MCF 10A (cell line): ENCODE measurements at regions of chr1 and their contacts with region 1.

Region 1: DNA sequence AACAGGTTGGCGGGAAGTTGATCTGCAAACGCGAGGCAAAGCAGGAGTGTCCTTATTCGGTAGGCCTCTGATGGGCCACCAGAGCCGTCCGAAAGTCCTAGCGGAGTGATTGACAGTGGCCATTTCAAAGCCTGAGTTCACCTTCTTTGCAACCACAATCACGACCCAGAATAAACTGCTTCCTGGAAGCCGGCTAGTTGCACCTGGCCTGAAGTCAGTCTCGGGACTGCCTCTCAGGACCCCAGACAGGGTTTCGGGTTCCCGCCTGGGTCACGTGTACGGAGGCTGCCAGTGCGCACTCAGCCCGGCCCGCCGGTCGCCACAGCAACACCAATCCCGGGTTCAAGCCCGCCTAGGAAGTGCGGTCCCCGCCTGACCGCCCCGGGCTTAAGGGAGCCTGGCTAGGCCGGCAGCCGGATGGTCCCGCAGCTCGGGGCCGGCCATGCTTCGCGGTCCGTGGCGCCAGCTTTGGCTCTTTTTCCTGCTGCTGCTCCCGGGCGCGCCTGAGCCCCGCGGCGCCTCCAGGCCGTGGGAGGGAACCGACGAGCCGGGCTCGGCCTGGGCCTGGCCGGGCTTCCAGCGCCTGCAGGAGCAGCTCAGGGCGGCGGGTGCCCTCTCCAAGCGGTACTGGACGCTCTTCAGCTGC is at the start of gene TOR3A:
- DNase-seq: peak; percentile 95
- H3K4me3 Mint-ChIP-seq: peak within 1 kb of the TSS; percentile 99
- H3K27ac Mint-ChIP-seq: peak within 1 kb of the TSS; percentile 98
- H3K4me1 Mint-ChIP-seq: peaks cover 12% of the 10 kb centered on the region
- H3K27me3 Mint-ChIP-seq: no peaks in the 10 kb centered on the region
- CTCF ChIP-seq: no peak
- total RNA-seq, gene TOR3A: 24.9 and 31.3 TPM in 2 replicates

Region 2: GRCh38 chr1:178774263-178774662 is 307.5 kb before region 1 on chr1:
- CTCF ChIA-PET with region 1: interaction called, 9 read pairs
- POLR2A ChIA-PET with region 1: no interaction called
- intact Hi-C with region 1: loop called (anchors 2 kb)
- DNase-seq: peak; percentile 54
- H3K4me3 Mint-ChIP-seq: no peak overlapping the region
- H3K27ac Mint-ChIP-seq: no peak overlapping the region
- H3K4me1 Mint-ChIP-seq: no peaks in the 10 kb centered on the region
- H3K27me3 Mint-ChIP-seq: no peaks in the 10 kb centered on the region
- CTCF ChIP-seq: peak; percentile 55

Region 3: GRCh38 chr1:178870944-178871343 is 210.9 kb before region 1 on chr1 and contains the start of gene ANGPTL1:
- CTCF ChIA-PET with region 1: no interaction called
- POLR2A ChIA-PET with region 1: no interaction called
- intact Hi-C with region 1: no loop called
- DNase-seq: no peak
- H3K4me3 Mint-ChIP-seq: no peak within 1 kb of the TSS
- H3K27ac Mint-ChIP-seq: no peak within 1 kb of the TSS
- H3K4me1 Mint-ChIP-seq: no peaks in the 10 kb centered on the region
- H3K27me3 Mint-ChIP-seq: no peaks in the 10 kb centered on the region
- CTCF ChIP-seq: no peak
- total RNA-seq, gene ANGPTL1: not detected in 2 replicates

Region 4: DNA sequence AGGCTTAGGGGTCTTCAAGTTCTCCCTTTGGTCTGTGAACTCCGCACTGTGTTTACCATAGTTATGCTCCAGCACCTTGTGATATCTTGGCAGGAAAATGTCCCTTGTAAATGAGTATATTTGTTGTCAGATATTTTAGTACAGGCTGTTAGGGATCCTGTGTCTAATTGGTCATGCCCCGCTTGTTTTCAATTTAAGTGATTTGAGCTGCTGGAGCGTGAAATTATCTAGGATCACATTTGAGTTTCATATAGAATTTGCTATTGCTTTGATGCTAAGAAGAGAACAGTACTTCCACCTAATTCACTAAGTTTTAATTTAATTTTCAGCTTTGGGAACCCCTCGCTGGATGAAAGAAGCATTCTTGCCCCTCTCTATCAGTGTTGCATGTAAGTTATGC is 15.3 kb before region 1 on chr1:
- CTCF ChIA-PET with region 1: interaction called, 56 read pairs
- POLR2A ChIA-PET with region 1: interaction called, 5 read pairs
- intact Hi-C with region 1: no loop called
- DNase-seq: no peak
- H3K4me3 Mint-ChIP-seq: no peak overlapping the region
- H3K27ac Mint-ChIP-seq: no peak overlapping the region
- H3K4me1 Mint-ChIP-seq: no peaks in the 10 kb centered on the region
- H3K27me3 Mint-ChIP-seq: no peaks in the 10 kb centered on the region
- CTCF ChIP-seq: no peak

Region 5: DNA sequence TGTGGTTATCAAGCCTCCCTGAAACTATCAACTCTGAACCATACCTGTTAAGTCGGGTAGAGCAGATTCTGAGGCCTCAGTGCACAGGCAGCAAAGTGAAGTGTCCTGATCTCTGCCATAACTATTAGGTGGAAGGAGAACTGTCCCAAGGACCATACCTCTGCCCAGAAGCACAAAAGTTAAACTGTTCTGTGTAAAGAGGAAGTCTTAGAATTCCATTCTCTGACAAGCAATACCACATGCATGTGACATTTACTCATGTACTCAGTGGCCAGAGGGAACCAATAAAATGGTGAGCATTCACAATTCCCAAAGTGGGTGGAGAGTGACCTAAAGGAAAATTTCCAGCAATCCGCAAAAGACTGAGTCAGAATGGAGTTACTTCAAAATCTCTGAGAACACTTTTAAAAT is 61.1 kb after region 1 on chr1:
- CTCF ChIA-PET with region 1: interaction called, 3 read pairs
- POLR2A ChIA-PET with region 1: interaction called, 16 read pairs
- intact Hi-C with region 1: no loop called
- DNase-seq: peak; percentile 97
- H3K4me3 Mint-ChIP-seq: peak overlapping the region; percentile 72
- H3K27ac Mint-ChIP-seq: peak overlapping the region; percentile 79
- H3K4me1 Mint-ChIP-seq: peaks cover 38% of the 10 kb centered on the region
- H3K27me3 Mint-ChIP-seq: no peaks in the 10 kb centered on the region
- CTCF ChIP-seq: no peak

Region 6: DNA sequence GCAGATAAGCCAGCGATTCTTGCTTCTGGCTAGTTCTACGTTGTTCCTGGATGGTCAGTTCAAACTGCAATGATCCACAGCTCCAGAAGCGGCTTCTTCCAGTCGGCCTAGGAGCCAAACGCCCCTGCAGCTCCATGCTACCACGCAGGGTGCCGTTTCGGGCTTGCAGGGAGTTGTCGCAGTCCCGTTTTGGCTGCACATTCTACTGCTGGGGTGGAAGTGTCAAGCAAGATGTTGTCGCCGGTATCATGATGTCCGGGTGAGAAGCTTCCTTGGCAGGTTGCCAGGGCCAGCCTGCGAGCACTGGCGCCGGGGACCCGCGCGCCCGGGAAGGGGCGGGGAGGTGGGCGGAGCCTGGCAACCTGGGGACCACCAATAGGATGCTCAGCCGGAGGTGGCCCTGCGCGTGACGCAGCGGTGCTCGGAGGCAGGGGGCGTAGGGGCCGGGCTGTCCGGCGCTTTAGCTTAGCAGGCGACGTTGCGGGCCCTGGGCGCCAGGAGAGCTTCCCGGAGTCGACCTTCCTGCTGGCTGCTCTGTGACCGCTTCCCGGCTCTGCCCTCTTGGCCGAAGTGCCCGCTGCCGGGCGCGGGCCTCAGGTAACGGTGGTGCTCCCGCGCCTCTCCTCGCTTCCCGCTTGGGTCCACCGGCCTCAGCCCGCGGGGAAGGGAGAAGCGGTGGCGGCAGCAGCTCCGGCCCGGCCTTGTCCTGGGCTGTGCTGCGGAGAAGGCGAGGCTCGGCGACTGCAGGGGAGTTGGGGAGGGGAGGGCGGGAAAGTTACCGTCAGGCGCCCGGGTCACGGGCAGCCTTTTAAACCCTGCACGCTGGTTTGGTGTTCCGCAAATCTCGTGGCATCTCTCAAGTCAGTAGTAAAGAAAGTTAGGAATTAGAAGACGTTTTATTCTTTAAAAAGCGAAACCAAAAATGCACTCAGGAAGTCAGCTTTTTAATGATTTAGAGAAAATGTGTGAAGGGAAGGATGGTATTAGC is 211.8 kb after region 1 on chr1 and contains the start of gene SOAT1:
- CTCF ChIA-PET with region 1: interaction called, 4 read pairs
- POLR2A ChIA-PET with region 1: interaction called, 5 read pairs
- intact Hi-C with region 1: loop called (anchors 1 kb)
- DNase-seq: peak; percentile 90
- H3K4me3 Mint-ChIP-seq: peak within 1 kb of the TSS; percentile 78
- H3K27ac Mint-ChIP-seq: peak within 1 kb of the TSS; percentile 68
- H3K4me1 Mint-ChIP-seq: peaks cover 29% of the 10 kb centered on the region
- H3K27me3 Mint-ChIP-seq: no peaks in the 10 kb centered on the region
- CTCF ChIP-seq: peak; percentile 16
- total RNA-seq, gene SOAT1: 28.4 and 39.7 TPM in 2 replicates